CD14-positive monocyte (primary cell): ENCODE measurements at regions of chr17 and their contacts with region 1.

Region 1: GRCh38 chr17:76397687-76398487 is 13.5 kb downstream of the SPHK1 start:
- DNase-seq: peak; percentile 73 to 79 (median 78)
- H3K4me3 ChIP-seq: no peak overlapping the region
- H3K4me3 Mint-ChIP-seq: no peak overlapping the region
- H3K27ac ChIP-seq: no peak overlapping the region
- H3K27ac Mint-ChIP-seq: no peak overlapping the region
- H3K4me1 ChIP-seq: no peaks in the 10 kb centered on the region
- H3K4me1 Mint-ChIP-seq: no peaks in the 10 kb centered on the region
- H3K27me3 ChIP-seq: no peaks in the 10 kb centered on the region
- H3K27me3 Mint-ChIP-seq: no peaks in the 10 kb centered on the region
- CTCF ChIP-seq: peak; percentile 96

Region 2: GRCh38 chr17:76304226-76305134 is 93.4 kb before region 1 on chr17:
- intact Hi-C with region 1: loop called (anchors 1 kb)
- DNase-seq: no peak
- H3K4me3 ChIP-seq: no peak overlapping the region
- H3K4me3 Mint-ChIP-seq: no peak overlapping the region
- H3K27ac ChIP-seq: no peak overlapping the region
- H3K27ac Mint-ChIP-seq: no peak overlapping the region
- H3K4me1 ChIP-seq: no peaks in the 10 kb centered on the region
- H3K4me1 Mint-ChIP-seq: no peaks in the 10 kb centered on the region
- H3K27me3 ChIP-seq: no peaks in the 10 kb centered on the region
- H3K27me3 Mint-ChIP-seq: peaks cover 0 to 5% (median 0%) of the 10 kb centered on the region in 3 donors
- CTCF ChIP-seq: no peak